GM10248 (cell line): ENCODE measurements at regions of chr7 and their contacts with region 1.

Region 1: DNA sequence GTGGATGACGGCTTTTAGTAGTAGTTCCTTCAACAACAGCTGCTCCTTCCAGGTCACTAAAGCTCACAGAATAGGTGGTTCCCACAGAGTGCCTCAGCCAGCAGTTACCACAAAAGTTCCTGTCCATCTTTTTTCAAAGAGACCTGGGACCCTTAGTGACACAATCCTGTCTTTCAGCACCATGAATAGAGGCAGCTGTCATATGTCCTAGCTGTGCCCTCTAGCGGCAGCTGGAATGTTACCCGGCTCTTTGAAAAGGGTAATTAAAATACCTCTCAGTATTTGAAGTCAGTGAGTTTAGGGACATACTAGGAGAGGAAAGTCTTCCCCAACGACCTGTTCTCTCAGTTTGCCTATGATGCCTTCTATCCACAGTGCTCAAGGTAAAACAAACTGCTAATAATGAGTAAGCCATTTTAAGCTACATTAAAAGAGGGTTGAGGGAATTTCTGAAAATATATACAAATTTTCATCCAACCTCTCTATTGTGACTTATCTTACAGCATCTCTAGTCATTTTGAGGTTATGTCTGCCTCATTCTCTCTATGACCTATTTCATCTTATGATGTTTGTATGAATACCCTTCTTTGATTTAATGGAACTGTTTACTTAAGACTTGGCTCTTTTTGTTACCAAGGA is 290.8 kb downstream of the NXPH1 start:
- DNase-seq: peak; percentile 54
- CTCF ChIP-seq: peak; percentile 75

Region 2: DNA sequence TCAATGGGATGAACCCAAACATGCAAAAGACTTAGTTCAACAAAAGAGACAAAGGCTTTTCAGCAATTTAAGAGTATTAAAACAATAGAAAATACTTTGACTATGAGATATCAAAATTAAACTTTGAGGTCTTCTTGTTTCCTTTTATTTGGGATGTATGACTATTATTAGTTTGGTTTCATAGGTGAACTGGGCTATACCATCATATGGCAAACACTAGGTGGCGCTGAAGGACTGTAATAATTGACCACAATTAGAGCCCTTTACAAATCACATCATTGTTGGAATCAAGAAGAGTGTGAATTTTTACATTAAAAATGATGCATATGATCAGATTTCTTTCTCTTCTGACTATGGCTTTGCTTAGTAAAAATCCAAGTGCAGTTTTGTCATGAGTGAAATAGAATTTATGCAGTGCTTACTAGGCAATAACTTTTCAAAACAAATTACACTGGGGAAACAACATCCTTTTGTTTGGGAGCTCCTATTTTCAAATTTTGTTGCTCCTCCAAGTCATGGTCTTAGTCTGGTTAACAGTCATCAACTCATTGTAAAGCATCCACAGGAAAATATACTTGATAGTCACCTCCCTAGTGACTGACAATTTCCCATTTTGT is 305.5 kb before region 1 on chr7:
- CTCF ChIA-PET with region 1: interaction called, 12 read pairs
- POLR2A ChIA-PET with region 1: no interaction called
- DNase-seq: peak; percentile 35
- CTCF ChIP-seq: peak; percentile 69

Region 3: GRCh38 chr7:8436965-8437364 is 287.2 kb before region 1 on chr7:
- CTCF ChIA-PET with region 1: interaction called, 10 read pairs
- POLR2A ChIA-PET with region 1: no interaction called
- DNase-seq: peak; percentile 69
- CTCF ChIP-seq: peak; percentile 85

Region 4: GRCh38 chr7:8514781-8515519 is 209.2 kb before region 1 on chr7:
- CTCF ChIA-PET with region 1: no interaction called
- POLR2A ChIA-PET with region 1: no interaction called
- DNase-seq: no peak
- CTCF ChIP-seq: no peak

Region 5: DNA sequence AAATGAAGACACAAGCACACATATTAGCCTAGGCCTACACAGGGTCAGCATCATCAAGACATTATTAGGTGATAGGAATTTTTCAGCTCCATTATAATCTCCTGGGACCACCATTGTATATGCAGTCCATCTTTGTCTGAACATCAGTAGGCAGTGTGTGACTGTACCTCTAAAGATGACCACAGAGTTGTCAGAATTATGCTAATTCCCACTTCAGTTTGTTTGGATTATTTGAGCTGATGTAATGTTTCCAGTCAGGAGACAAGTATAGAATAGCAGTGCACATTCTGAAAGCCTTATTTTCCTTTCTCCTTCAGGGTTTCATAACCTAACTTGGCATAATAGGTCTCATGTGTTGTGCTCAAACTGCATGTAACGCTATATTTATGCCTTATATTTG is 15.6 kb after region 1 on chr7:
- CTCF ChIA-PET with region 1: interaction called, 18 read pairs
- POLR2A ChIA-PET with region 1: no interaction called
- DNase-seq: no peak
- CTCF ChIP-seq: no peak

Region 6: DNA sequence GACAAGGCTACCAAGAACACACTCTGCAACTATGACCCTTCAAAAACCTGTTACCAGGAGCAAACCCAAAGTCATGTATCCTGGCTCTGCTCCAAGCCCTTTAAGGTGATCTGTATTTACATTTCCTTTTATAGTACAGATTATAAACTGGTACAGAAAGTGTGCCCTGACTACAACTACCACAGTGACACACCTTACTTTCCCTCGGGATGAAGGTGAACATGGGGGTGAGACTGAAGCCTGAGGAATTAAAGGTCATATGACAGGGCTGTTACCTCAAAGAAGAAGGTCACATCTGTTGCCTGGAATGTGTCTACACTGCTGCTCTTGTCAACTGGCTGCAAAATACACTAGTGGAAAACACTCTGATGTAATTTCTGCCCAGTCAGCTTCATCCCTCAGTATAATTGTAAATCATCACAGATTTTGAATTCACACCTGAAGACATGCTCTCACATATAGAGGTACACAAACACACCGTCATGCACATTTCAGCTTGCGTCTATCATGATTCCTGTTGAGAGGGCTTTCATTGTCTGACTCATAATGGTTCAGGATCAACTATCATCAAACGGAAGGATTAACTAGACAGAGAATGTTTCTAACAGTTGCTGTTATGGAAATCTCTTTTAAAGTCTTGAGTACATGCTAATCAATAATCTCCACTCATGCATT is 27.5 kb after region 1 on chr7:
- CTCF ChIA-PET with region 1: interaction called, 11 read pairs
- POLR2A ChIA-PET with region 1: no interaction called
- DNase-seq: no peak
- CTCF ChIP-seq: no peak